Activated CD4-positive, alpha-beta T cell treated with anti-CD3 and anti-CD28 coated beads, Interleukin-2, amount 10 ng/mL, durations not matched to agents 24 days and 14 days (primary cell): ENCODE measurements at regions of chr7 and their contacts with region 1.

Region 1: DNA sequence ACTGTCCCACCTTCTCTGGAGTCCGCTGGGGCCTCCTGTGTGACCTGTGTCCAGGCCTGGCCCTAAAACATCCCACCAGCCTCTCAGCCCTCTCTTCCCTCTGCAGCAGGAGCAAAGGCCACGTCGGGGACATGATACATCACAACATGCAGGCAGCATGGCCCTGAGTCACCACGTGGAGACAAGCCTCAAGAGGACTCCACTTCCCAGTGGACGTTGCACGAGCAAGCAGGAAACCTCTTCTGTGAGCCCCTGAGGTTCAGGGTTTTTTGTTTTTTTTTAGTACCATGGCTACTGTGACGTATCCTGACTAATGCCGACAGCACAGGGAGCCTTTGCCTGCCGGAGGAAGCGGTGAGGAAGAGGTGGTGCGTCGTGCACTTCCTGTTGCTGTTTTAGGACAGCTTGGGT is 165.9 kb downstream of the DNAJB6 start:
- DNase-seq: peak; percentile 91
- H3K4me3 Mint-ChIP-seq: peak overlapping the region; percentile 78
- H3K27ac Mint-ChIP-seq: peak overlapping the region; percentile 87
- H3K4me1 Mint-ChIP-seq: peaks cover 22% of the 10 kb centered on the region
- H3K27me3 Mint-ChIP-seq: peaks cover 13% of the 10 kb centered on the region

Region 2: DNA sequence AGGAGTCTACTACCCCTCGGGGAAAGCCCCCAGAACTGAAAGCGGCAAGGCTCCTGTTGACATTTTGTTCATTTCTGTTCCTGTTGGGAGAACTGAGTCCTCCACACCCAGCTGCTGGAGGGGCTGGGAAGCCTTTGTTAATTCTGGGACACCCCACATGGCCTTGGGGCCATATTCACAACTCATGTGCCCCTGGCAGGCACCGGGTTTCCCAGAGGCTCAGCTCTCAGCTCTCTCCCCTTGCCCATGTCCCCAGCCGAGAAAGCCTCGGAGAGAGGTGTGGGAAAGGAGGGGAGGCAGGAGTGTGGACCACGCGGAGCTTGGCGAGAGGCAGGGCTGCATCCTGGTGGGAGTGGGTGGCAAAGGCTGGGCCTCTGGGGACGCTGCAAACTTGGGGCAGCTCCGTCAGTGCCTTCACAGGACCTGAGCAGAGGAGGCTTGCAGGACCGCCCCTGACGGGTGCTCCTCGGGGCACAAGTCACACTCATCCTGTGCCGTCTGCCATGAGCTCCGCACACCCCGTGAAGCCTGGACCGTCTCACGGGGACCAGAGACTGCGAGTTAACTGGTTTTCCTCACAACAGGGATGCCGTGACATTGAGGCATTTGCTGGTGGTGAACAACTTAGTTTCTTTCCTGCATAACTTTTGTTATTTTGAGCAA is 25.0 kb before region 1 on chr7:
- intact Hi-C with region 1: loop called (anchors 1 kb)
- DNase-seq: peak; percentile 78
- H3K4me3 Mint-ChIP-seq: peak overlapping the region; percentile 56
- H3K27ac Mint-ChIP-seq: peak overlapping the region; percentile 39
- H3K4me1 Mint-ChIP-seq: peaks cover 25% of the 10 kb centered on the region
- H3K27me3 Mint-ChIP-seq: no peaks in the 10 kb centered on the region